MCF 10A (cell line): ENCODE measurements at regions of chr18 and their contacts with region 1.

Region 1: GRCh38 chr18:9614401-9615279 is at the start of gene PPP4R1:
- DNase-seq: peak; percentile 68
- H3K4me3 Mint-ChIP-seq: peak within 1 kb of the TSS; percentile 97
- H3K27ac Mint-ChIP-seq: peak within 1 kb of the TSS; percentile 96
- H3K4me1 Mint-ChIP-seq: peaks cover 28% of the 10 kb centered on the region
- H3K27me3 Mint-ChIP-seq: no peaks in the 10 kb centered on the region
- CTCF ChIP-seq: no peak
- total RNA-seq, gene PPP4R1: 88.0 and 109 TPM in 2 replicates

Region 2: DNA sequence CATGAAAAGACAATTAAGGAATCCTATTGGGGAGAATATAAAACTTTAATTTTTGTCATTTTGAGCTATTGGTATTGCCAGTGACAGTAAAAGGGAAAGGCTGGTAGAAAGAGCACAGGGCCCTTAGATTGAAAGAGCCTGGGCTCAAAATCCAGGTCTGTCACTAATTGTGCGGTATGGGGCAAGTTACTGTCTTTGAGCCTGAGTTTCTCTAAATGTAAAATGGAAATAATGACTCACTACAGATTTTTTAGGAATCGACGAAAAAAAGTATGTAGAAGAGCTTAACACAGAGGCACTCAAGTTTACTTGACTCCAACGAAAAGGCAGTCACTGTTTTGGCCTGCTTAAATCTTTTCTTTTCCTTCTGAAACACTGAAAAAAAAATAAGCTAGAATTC is 505.1 kb before region 1 on chr18:
- CTCF ChIA-PET with region 1: no interaction called
- POLR2A ChIA-PET with region 1: no interaction called
- intact Hi-C with region 1: no loop called
- DNase-seq: no peak
- H3K4me3 Mint-ChIP-seq: no peak overlapping the region
- H3K27ac Mint-ChIP-seq: peak overlapping the region; percentile 46
- H3K4me1 Mint-ChIP-seq: peaks cover 45% of the 10 kb centered on the region
- H3K27me3 Mint-ChIP-seq: no peaks in the 10 kb centered on the region
- CTCF ChIP-seq: no peak

Region 3: DNA sequence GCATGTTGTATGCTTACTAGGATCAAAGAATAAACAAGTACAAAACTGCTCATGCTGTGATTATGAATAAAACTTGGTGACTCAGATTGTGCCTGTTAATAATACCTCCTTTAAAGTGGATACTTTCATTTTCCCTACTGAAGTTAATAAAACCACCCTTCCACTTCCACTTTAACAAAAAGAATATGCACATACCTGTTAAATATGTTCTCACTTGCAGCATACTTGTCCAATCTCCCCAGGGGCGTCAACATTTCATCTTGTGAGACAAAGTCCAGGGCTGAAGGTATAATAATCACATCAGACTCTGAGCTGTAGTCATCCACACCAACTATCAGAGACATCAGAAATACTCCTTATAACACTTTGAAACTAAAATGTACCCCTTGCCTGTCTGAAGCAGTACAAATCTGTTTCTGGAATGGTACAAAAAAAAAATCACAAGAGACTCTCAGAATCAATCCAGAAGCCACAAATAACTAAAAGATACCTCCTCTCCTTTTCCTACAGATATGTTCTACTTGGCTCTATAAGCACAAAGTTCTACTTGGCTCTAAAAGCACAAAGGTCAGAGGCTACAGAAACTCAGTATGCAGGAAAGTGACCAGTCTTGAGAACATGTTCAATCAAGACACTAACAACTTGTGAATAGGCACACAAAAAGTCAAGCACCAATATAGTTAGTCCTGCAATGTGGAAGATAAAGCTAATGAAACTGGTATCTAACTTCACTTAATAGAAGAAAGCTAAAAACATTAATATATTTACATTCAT is 19.6 kb before region 1 on chr18:
- CTCF ChIA-PET with region 1: interaction called, 5 read pairs
- POLR2A ChIA-PET with region 1: interaction called, 22 read pairs
- intact Hi-C with region 1: no loop called
- DNase-seq: peak; percentile 17
- H3K4me3 Mint-ChIP-seq: peak overlapping the region; percentile 48
- H3K27ac Mint-ChIP-seq: peak overlapping the region; percentile 57
- H3K4me1 Mint-ChIP-seq: peaks cover 20% of the 10 kb centered on the region
- H3K27me3 Mint-ChIP-seq: no peaks in the 10 kb centered on the region
- CTCF ChIP-seq: no peak

Region 4: GRCh38 chr18:9643549-9643948 is 28.9 kb after region 1 on chr18:
- CTCF ChIA-PET with region 1: interaction called, 3 read pairs
- POLR2A ChIA-PET with region 1: interaction called, 17 read pairs
- intact Hi-C with region 1: loop called (anchors 1 kb)
- DNase-seq: peak; percentile 84
- H3K4me3 Mint-ChIP-seq: peak overlapping the region; percentile 4
- H3K27ac Mint-ChIP-seq: peak overlapping the region; percentile 96
- H3K4me1 Mint-ChIP-seq: peaks cover 19% of the 10 kb centered on the region
- H3K27me3 Mint-ChIP-seq: no peaks in the 10 kb centered on the region
- CTCF ChIP-seq: no peak

Region 5: DNA sequence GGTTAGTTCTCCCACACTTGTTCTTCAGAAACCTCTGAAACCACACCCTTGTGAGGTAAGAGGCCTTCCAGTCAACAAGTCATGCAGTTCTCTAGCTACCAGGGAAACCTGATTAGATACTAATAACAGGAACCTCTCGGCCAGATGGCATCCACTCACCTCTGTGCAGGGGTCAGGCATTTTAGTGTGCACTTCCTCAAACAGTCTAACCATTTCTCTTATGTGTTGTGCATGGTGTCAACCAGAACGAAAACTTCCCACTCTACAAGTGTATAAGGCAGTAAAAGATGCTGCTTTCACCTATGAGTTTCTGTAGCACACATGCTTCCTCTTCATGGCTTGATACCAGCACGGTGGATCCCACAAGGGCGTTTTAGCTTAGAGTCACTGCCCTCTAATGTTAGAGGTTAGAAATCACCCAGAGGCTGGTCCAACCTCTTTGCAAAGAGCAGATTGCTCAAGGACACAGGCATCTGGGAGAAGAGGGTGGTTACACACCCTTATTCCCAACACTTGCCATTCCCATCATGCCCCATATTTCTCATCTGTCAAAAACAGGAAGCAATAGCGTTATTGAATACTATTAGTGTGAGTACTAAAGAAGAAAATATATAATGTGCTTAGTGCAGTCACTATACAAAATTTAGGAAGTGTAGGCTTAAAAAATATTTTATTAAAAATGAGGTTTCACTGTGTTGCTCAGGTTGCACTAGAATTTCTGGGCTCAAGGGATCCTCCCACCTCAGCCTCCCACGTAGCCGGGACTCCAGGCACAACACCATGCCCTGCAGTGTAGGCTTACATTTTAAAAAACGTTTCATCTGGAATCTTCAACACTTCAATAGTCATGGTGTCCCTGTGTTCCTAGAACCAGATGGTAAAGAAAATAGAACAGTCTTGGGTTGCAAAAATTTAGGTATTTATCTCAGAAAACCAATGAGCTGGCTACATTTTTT is 58.9 kb after region 1 on chr18:
- CTCF ChIA-PET with region 1: interaction called, 20 read pairs
- POLR2A ChIA-PET with region 1: interaction called, 53 read pairs
- intact Hi-C with region 1: loop called (anchors 1 kb)
- DNase-seq: peak; percentile 93
- H3K4me3 Mint-ChIP-seq: peak overlapping the region; percentile 43
- H3K27ac Mint-ChIP-seq: peak overlapping the region; percentile 94
- H3K4me1 Mint-ChIP-seq: peaks cover 17% of the 10 kb centered on the region
- H3K27me3 Mint-ChIP-seq: no peaks in the 10 kb centered on the region
- CTCF ChIP-seq: peak; percentile 21

Region 6: GRCh38 chr18:9719421-9719981 is 104.9 kb after region 1 on chr18:
- CTCF ChIA-PET with region 1: interaction called, 9 read pairs
- POLR2A ChIA-PET with region 1: interaction called, 4 read pairs
- intact Hi-C with region 1: loop called (anchors 5 kb)
- DNase-seq: peak; percentile 94
- H3K4me3 Mint-ChIP-seq: peak overlapping the region; percentile 68
- H3K27ac Mint-ChIP-seq: peak overlapping the region; percentile 30
- H3K4me1 Mint-ChIP-seq: peaks cover 24% of the 10 kb centered on the region
- H3K27me3 Mint-ChIP-seq: no peaks in the 10 kb centered on the region
- CTCF ChIP-seq: no peak

Region 7: DNA sequence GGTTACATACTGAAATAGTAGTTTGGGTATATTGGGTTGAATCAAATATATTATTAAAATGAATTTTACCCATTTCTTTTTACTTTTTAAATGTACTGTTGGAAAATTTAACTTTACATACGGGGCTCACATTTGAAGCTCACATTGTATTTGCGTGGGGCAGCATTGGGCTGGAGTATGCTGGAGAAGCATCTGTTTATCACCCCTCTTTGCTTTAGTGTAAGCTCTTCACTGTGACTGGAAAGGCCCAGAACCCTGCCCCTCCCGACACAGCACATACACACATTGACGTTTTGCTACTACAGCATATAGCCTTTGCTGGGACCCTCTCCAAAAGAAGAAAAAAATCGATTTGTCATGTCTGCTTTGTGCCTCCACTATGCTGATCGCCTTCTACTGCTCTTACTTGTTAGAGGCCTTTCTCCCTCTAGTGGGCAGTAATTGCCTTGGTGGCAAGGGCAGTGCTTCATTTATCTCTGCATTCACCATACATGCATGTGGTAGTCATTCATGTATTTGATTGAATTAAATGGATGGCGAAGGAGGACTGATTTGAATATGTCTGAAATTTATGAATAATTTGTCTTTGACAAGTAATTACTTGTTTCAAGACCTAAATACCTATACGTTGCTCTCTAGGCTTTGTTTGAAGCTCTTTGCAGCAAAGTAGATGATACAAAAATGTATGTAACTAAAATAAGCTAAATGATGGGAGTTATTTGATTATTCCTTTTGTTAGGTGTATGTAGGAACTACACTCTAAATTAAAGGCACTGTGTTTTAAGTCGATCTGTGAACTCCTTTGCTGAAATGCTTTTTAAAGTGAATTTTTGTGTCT is 336.6 kb after region 1 on chr18:
- CTCF ChIA-PET with region 1: interaction called, 12 read pairs
- POLR2A ChIA-PET with region 1: interaction called, 4 read pairs
- intact Hi-C with region 1: no loop called
- DNase-seq: peak; percentile 70
- H3K4me3 Mint-ChIP-seq: no peak overlapping the region
- H3K27ac Mint-ChIP-seq: peak overlapping the region; percentile 64
- H3K4me1 Mint-ChIP-seq: peaks cover 33% of the 10 kb centered on the region
- H3K27me3 Mint-ChIP-seq: no peaks in the 10 kb centered on the region
- CTCF ChIP-seq: peak; percentile 67